CD4-positive, alpha-beta T cell (primary cell): ENCODE measurements at regions of chr19 and their contacts with region 1.

Region 1: GRCh38 chr19:29724102-29724641 is 9.1 kb upstream of the C19orf12 start:
- DNase-seq: peak in 7 of 14 experiments; percentile 9 to 54 (median 41)
- ATAC-seq: peak; percentile 74
- H3K4me3 ChIP-seq: peak overlapping the region; percentile 48
- H3K4me3 Mint-ChIP-seq: peak overlapping the region; percentile 83
- H3K27ac ChIP-seq: no peak overlapping the region
- H3K27ac Mint-ChIP-seq: peak overlapping the region; percentile 53
- H3K4me1 ChIP-seq: peaks cover 13% of the 10 kb centered on the region
- H3K4me1 Mint-ChIP-seq: peaks cover 6% of the 10 kb centered on the region
- H3K27me3 ChIP-seq: peaks cover 5 to 10% of the 10 kb centered on the region in 2 experiments
- H3K27me3 Mint-ChIP-seq: peaks cover 26% of the 10 kb centered on the region
- CTCF ChIP-seq: no peak

Region 2: DNA sequence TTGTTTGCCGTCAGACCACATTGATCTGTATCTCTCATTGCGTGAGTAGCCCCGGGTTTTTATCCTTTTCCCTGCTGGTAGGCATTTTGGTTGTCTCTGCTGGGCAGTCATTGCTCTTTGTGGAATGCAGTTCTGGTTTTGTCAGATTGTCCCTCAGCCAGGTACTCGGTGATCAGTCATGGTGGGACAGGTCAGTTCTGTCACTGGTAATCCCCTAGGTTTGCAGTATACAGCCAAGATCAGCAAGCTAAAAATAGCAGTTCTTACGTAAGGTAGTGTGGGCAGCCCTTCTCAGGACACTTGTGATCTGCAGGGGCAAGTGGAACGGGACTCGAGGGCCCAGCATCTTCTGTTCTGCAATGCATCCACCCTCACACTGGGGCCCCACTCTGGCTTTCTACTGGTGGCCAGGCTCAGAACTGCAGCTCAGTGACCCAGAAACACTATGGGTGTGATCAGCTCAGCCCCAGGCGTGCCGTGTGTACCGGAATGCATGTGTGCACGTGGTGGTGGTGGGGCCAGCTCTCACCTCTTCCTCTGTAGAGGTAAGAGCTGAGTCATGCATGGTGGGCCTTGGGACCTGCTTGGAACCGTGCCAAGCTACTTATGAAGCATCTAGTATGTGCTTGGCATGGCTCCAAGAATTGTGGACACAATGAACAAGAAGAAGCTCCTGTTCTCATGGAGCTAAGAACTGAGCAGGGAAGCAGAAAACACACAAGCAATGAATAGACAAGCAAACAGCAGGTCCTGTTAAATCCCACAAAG is 52.6 kb before region 1 on chr19:
- CTCF ChIA-PET with region 1: no interaction called
- POLR2A ChIA-PET with region 1: no interaction called
- intact Hi-C with region 1: no loop called
- DNase-seq: peak; percentile 73 to 94 (median 89)
- ATAC-seq: peak; percentile 63
- H3K4me3 ChIP-seq: peak overlapping the region; percentile 30
- H3K4me3 Mint-ChIP-seq: peak overlapping the region; percentile 68
- H3K27ac ChIP-seq: peak overlapping the region; percentile 78 to 86
- H3K27ac Mint-ChIP-seq: peak overlapping the region; percentile 98
- H3K4me1 ChIP-seq: peaks cover 98% of the 10 kb centered on the region
- H3K4me1 Mint-ChIP-seq: peaks cover 88% of the 10 kb centered on the region
- H3K27me3 ChIP-seq: no peaks in the 10 kb centered on the region
- H3K27me3 Mint-ChIP-seq: no peaks in the 10 kb centered on the region
- CTCF ChIP-seq: peak; percentile 56

Region 3: DNA sequence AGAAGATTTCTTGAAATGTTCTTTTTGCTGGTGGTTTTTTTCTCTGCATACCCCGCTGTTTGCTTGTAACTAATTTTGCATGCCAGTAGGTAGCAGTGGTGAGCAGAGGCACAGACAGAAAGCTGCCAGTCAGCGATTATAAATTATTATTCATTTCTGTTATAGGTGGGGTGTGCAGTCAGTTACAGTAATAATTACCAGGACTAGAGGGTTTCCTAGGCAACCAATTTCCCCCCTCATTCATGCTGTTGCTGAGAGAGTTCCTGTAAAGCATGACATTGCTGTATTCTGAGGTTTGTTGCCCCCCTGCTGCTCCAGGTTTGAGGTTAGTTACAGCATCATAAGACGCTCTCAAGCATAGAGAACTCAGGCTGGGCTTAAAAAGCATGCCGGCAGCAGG is 322.4 kb after region 1 on chr19:
- CTCF ChIA-PET with region 1: no interaction called
- POLR2A ChIA-PET with region 1: no interaction called
- intact Hi-C with region 1: loop called in 1 of 2 experiments (anchors 10 kb)
- DNase-seq: peak in 1 of 14 experiments; percentile 3
- ATAC-seq: no peak
- H3K4me3 ChIP-seq: no peak overlapping the region
- H3K4me3 Mint-ChIP-seq: no peak overlapping the region
- H3K27ac ChIP-seq: no peak overlapping the region
- H3K27ac Mint-ChIP-seq: no peak overlapping the region
- H3K4me1 ChIP-seq: no peaks in the 10 kb centered on the region
- H3K4me1 Mint-ChIP-seq: peaks cover 18% of the 10 kb centered on the region
- H3K27me3 ChIP-seq: no peaks in the 10 kb centered on the region
- H3K27me3 Mint-ChIP-seq: no peaks in the 10 kb centered on the region
- CTCF ChIP-seq: no peak

Region 4: DNA sequence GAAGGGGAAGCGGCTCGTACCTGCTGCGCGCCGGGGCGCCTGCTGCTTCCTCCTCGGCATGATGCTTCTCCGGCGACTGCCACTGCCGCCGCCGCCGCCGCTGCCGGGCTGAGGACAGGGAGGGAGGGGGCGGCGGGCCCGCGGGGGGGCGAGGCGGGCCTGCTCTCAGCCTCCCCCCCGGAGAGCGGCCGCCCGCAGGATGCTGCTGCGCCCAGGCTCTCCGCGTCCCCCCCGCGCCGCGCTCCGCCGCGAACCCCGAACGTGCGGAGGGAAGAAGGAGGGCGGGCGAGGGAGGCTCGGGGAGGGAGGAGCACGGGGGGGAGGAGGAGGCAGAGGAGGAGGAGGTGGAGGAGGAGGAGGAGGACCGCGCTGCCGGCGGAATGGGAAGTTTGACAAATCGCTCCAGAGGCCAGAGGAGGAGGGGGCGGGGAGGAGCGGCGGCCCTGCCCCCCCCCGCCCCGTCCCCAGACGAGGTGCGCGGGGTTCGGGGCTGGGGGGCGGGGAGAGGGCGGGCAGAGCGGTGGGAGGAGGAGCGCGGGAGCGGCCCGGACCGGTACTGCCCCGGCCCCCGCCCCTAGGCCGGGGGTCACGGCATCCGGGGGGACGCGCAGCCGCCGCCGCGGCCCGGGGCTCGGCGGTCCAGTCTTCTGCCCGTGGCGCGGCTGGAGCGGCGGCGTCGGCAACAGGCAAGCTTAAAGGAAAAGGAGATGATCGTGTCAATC is 1625.1 kb after region 1 on chr19 and contains the start of gene TSHZ3:
- CTCF ChIA-PET with region 1: no interaction called
- POLR2A ChIA-PET with region 1: no interaction called
- intact Hi-C with region 1: loop called in 1 of 2 experiments (anchors 10 kb)
- DNase-seq: peak in 9 of 14 experiments; percentile 13 to 72 (median 43)
- ATAC-seq: peak; percentile 50
- H3K4me3 ChIP-seq: peak within 1 kb of the TSS; percentile 63
- H3K4me3 Mint-ChIP-seq: peak within 1 kb of the TSS; percentile 90
- H3K27ac ChIP-seq: no peak within 1 kb of the TSS
- H3K27ac Mint-ChIP-seq: no peak within 1 kb of the TSS
- H3K4me1 ChIP-seq: peaks cover 50% of the 10 kb centered on the region
- H3K4me1 Mint-ChIP-seq: peaks cover 41% of the 10 kb centered on the region
- H3K27me3 ChIP-seq: peaks cover 67 to 82% of the 10 kb centered on the region in 2 experiments
- H3K27me3 Mint-ChIP-seq: peaks cover 74% of the 10 kb centered on the region
- CTCF ChIP-seq: no peak
- total RNA-seq, gene TSHZ3: 0.38 to 0.61 TPM